ENCODE measurements at regions of chr6 and their contacts with region 1.

Region 1: DNA sequence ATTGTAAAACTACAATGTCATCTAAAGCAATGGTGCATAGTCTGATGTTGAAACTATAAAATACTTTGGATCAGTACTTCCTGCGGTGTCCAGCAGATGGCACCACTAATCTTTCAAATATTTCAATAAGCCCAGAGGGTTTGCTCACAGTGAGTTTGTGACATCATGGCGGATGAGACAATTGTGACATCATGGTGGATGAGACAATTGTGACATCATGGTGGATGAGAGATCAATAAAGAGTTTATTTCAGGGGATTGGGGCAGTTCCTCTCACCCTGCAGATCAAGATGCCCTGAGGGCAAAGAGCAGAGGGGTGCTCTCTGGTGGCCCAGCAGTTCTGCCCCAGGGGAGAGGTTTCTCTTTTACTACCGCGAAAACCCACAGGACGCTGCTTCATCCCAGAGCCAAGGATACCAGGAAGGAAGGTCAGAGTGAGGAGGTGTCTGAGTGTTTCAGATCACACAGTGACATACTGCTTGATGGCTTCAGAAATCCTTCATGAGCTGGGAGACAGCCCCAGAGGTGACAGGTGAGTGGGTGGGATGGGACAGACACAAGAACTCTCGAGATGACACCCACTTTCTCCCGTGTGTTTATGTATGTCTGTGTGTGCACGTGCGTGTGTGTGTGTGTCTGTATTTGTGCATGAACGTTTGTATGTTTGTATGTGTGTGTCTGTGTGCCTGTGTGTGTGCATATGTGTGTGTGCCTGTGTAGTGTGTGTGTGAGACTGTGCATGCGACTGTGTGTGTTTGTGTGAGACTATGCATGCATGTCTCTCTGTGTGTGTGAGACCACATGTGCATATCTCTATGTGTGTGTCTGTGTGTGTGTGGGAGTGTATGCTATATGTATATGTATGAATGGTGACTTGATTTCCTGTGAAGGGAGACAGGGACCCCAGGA is 7.3 kb upstream of the ULBP2 start:
- DNase-seq: peak in 1 of 2 donors; percentile 55
- ATAC-seq: peak in 7 of 8 donors; percentile 59 to 73 (median 68)
- H3K4me3 ChIP-seq: no peak overlapping the region
- H3K27ac ChIP-seq: no peak overlapping the region
- H3K4me1 ChIP-seq: peaks cover 5 to 14% (median 11%) of the 10 kb centered on the region in 9 donors
- H3K27me3 ChIP-seq: peaks cover 16 to 99% (median 96%) of the 10 kb centered on the region in 7 donors
- CTCF ChIP-seq: peak; percentile 68 to 87 (median 83)

Region 2: GRCh38 chr6:149834513-149835481 is 99.7 kb before region 1 on chr6:
- intact Hi-C with region 1: loop called in 2 of 10 experiments (anchors 5 kb)
- DNase-seq: peak in 1 of 2 donors; percentile 54
- ATAC-seq: peak in 4 of 8 donors; percentile 37 to 72 (median 56)
- H3K4me3 ChIP-seq: no peak overlapping the region
- H3K27ac ChIP-seq: no peak overlapping the region
- H3K4me1 ChIP-seq: peaks cover 0 to 1% (median 0%) of the 10 kb centered on the region in 9 donors
- H3K27me3 ChIP-seq: no peaks in the 10 kb centered on the region
- CTCF ChIP-seq: peak; percentile 82 to 97 (median 93)

Region 3: DNA sequence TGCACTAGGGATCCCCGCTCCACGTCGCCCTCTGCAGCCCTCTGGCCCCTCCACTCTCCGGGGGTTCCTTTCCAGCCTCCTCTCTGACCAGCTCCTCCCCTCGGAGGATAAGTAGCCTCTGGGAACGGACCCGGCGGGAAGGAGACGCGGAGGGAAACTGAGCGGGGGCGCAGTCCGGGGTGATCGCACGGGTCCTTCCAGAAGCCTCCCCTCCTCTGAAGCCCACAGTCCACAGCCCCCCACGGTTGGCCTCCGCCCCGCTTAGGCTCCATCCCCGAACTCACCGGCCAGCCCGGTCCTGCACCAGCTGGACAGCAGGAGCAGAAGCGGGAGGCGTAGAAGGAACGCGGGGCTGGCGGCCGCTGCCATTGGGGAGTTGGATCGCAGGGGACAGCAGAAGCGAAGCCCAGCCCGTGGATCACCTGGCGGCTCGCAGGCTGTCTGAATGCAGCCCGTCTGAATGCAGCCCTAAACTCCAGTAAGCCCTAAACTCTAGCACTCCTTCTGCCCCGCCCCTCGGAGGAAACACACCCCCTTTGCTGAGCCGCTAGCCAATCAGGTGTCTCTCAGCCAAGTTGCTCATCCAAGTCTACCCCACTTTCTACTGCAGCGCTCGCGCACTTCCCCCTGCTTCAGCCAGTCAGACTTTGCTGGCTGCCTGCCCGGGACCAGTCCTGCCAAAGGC is 11.7 kb before region 1 on chr6 and contains the start of gene RAET1G:
- intact Hi-C with region 1: no loop called
- DNase-seq: peak; percentile 88 to 93
- ATAC-seq: peak; percentile 82 to 92 (median 88)
- H3K4me3 ChIP-seq: peak within 1 kb of the TSS in 9 of 10 donors; percentile 36 to 67 (median 60)
- H3K27ac ChIP-seq: no peak within 1 kb of the TSS
- H3K4me1 ChIP-seq: peaks cover 3 to 33% (median 23%) of the 10 kb centered on the region in 9 donors
- H3K27me3 ChIP-seq: peaks cover 0 to 61% (median 0%) of the 10 kb centered on the region in 7 donors
- CTCF ChIP-seq: no peak
- total RNA-seq, gene RAET1G: 0.21 to 0.37 (median 0.36) TPM in 3 of 10 donors, not detected in the others

Region 4: DNA sequence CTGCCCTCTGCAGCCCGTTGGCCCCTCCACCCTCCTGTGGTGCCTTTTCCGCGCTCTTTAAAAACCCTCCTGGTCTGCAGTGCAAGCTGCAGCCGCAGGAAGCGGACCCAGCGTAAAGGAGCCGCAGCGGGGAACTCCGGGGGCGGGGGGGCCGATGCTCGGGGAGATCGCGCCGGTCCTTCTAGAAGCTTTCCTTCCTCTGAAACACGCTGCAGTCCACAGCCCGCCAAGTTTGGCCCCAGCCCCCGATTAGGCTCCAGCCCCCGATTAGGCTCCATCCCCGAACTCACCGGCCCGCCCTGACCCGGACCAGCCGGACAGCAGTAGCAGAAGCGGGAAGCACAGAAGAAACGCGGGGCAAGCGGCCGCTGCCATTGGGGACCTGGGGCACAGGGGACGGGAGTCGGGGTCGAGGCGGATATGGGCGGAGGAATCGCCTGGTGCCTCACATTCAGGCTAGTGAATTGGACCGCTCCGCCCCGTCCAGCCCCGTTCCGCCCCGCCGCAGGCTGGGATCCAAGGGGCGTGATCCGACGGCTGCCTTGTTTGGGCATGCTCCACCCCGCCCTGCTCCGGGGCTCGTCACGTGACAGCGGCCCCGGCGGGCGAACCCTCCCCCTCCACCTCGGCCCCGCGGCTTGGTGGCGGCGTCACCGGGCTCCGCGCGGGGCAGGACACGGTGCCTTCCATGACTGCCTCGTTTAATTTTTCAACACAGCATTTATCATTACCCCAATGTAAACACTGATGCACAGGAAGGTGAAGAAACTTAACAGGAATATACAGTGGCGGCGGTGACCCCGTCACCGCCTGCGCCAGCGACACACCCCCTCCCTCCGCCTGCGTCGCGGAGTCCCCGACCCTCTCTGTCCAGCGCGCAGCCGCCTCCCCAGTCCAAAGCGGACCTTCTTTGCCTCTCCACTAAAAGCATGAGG is 70.5 kb after region 1 on chr6:
- intact Hi-C with region 1: loop called in 2 of 10 experiments (anchors 5 kb)
- DNase-seq: peak; percentile 94
- ATAC-seq: peak; percentile 99
- H3K4me3 ChIP-seq: peak overlapping the region; percentile 21 to 78 (median 66)
- H3K27ac ChIP-seq: peak overlapping the region in 3 of 10 donors; percentile 39 to 42 (median 41)
- H3K4me1 ChIP-seq: peaks cover 6 to 16% (median 11%) of the 10 kb centered on the region in 9 donors
- H3K27me3 ChIP-seq: peaks cover 8 to 70% (median 55%) of the 10 kb centered on the region in 7 donors
- CTCF ChIP-seq: peak in 1 of 9 donors; percentile 7

Region 5: GRCh38 chr6:150016324-150017185 is 82.1 kb after region 1 on chr6:
- intact Hi-C with region 1: loop called in 9 of 10 experiments (anchors 1 to 2 kb)
- DNase-seq: peak in 1 of 2 donors; percentile 68
- ATAC-seq: peak in 7 of 8 donors; percentile 71 to 85 (median 83)
- H3K4me3 ChIP-seq: no peak overlapping the region
- H3K27ac ChIP-seq: no peak overlapping the region
- H3K4me1 ChIP-seq: peaks cover 0 to 10% (median 0%) of the 10 kb centered on the region in 9 donors
- H3K27me3 ChIP-seq: peaks cover 16 to 82% (median 72%) of the 10 kb centered on the region in 7 donors
- CTCF ChIP-seq: peak; percentile 52 to 81 (median 72)

Region 6: GRCh38 chr6:150334790-150335783 is 400.6 kb after region 1 on chr6:
- intact Hi-C with region 1: loop called in 1 of 10 experiments (anchors 10 kb)
- DNase-seq: peak in 1 of 2 donors; percentile 51
- ATAC-seq: peak in 3 of 8 donors; percentile 33 to 59 (median 37)
- H3K4me3 ChIP-seq: no peak overlapping the region
- H3K27ac ChIP-seq: no peak overlapping the region
- H3K4me1 ChIP-seq: no peaks in the 10 kb centered on the region
- H3K27me3 ChIP-seq: peaks cover 0 to 4% (median 0%) of the 10 kb centered on the region in 7 donors
- CTCF ChIP-seq: peak; percentile 57 to 91 (median 86)

Measured in heart right ventricle (tissue), 16 donors.